ENCODE measurements at regions of chr7 and their contacts with region 1.

Region 1: GRCh38 chr7:83976295-83976694 is 218.3 kb downstream of the SEMA3A start:
- DNase-seq: no peak
- H3K4me3 ChIP-seq: no peak overlapping the region
- H3K27ac ChIP-seq: no peak overlapping the region
- H3K4me1 ChIP-seq: peaks cover 0 to 8% (median 3%) of the 10 kb centered on the region in 4 donors
- H3K27me3 ChIP-seq: no peaks in the 10 kb centered on the region
- CTCF ChIP-seq: peak; percentile 49 to 59 (median 56)
- EP300 ChIP-seq: no peak
- POLR2A ChIP-seq: no peak

Region 2: GRCh38 chr7:84013710-84014171 is 37.4 kb after region 1 on chr7:
- intact Hi-C with region 1: no loop called
- DNase-seq: no peak
- H3K4me3 ChIP-seq: no peak overlapping the region
- H3K27ac ChIP-seq: no peak overlapping the region
- H3K4me1 ChIP-seq: peaks cover 0 to 11% (median 5%) of the 10 kb centered on the region in 4 donors
- H3K27me3 ChIP-seq: no peaks in the 10 kb centered on the region
- CTCF ChIP-seq: no peak
- EP300 ChIP-seq: no peak
- POLR2A ChIP-seq: no peak

Region 3: GRCh38 chr7:84092207-84092606 is 115.9 kb after region 1 on chr7:
- intact Hi-C with region 1: no loop called
- DNase-seq: no peak
- H3K4me3 ChIP-seq: peak overlapping the region in 1 of 4 donors; percentile 15
- H3K27ac ChIP-seq: peak overlapping the region in 1 of 4 donors; percentile 11
- H3K4me1 ChIP-seq: peaks cover 0 to 19% (median 0%) of the 10 kb centered on the region in 4 donors
- H3K27me3 ChIP-seq: no peaks in the 10 kb centered on the region
- CTCF ChIP-seq: no peak
- EP300 ChIP-seq: no peak
- POLR2A ChIP-seq: no peak

Region 4: GRCh38 chr7:84317536-84317935 is 341.2 kb after region 1 on chr7:
- intact Hi-C with region 1: loop called (anchors 10 kb)
- DNase-seq: no peak
- H3K4me3 ChIP-seq: peak overlapping the region in 3 of 4 donors; percentile 34 to 48 (median 44)
- H3K27ac ChIP-seq: peak overlapping the region in 3 of 4 donors; percentile 71 to 80 (median 74)
- H3K4me1 ChIP-seq: peaks cover 0 to 4% (median 0%) of the 10 kb centered on the region in 4 donors
- H3K27me3 ChIP-seq: no peaks in the 10 kb centered on the region
- CTCF ChIP-seq: no peak
- EP300 ChIP-seq: no peak
- POLR2A ChIP-seq: no peak

Region 5: DNA sequence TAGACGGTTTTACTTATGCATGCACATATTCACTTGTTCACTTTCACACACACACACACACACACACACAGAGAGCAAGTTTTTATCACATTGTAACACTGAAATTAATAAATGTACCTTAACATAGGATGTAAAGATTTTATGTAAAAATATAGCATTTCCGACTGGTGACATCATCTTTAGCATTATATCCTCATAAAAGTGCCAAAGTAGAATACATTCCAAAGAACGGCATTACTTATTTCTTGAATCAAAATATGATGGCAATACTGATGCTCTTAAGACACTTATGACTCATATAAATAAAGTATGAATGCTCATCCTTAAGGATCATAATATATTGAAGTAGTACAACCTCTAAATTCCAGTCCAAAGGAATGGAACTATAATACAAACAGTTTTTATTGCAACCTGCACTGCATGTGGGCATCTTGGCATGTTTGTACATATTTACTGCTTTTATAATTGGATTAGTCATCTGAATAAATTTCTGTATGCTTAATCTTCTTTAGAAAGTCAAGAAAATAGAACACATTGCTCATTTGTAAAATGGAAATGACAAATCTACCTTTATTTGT is 508.3 kb after region 1 on chr7:
- intact Hi-C with region 1: loop called (anchors 10 kb)
- DNase-seq: no peak
- H3K4me3 ChIP-seq: no peak overlapping the region
- H3K27ac ChIP-seq: peak overlapping the region in 1 of 4 donors; percentile 13
- H3K4me1 ChIP-seq: peaks cover 0 to 26% (median 0%) of the 10 kb centered on the region in 4 donors
- H3K27me3 ChIP-seq: no peaks in the 10 kb centered on the region
- CTCF ChIP-seq: no peak
- EP300 ChIP-seq: no peak
- POLR2A ChIP-seq: no peak

Region 6: GRCh38 chr7:85023045-85023712 is 1046.9 kb after region 1 on chr7:
- intact Hi-C with region 1: loop called (anchors 2 kb)
- DNase-seq: no peak
- H3K4me3 ChIP-seq: no peak overlapping the region
- H3K27ac ChIP-seq: no peak overlapping the region
- H3K4me1 ChIP-seq: peaks cover 0 to 7% (median 2%) of the 10 kb centered on the region in 4 donors
- H3K27me3 ChIP-seq: no peaks in the 10 kb centered on the region
- CTCF ChIP-seq: peak; percentile 14 to 70 (median 62)
- EP300 ChIP-seq: no peak
- POLR2A ChIP-seq: no peak